ENCODE measurements at regions of chr12 and their contacts with region 1.

Region 1: GRCh38 chr12:108193917-108194316 is 64.8 kb downstream of the WSCD2 start:
- DNase-seq: peak; percentile 48
- ATAC-seq: no peak
- H3K4me3 Mint-ChIP-seq: no peak overlapping the region
- H3K27ac Mint-ChIP-seq: no peak overlapping the region
- H3K4me1 Mint-ChIP-seq: no peaks in the 10 kb centered on the region
- H3K27me3 Mint-ChIP-seq: peaks cover 7% of the 10 kb centered on the region

Region 2: GRCh38 chr12:107670999-107671643 is 522.8 kb before region 1 on chr12:
- CTCF ChIA-PET with region 1: no interaction called
- POLR2A ChIA-PET with region 1: no interaction called
- intact Hi-C with region 1: loop called in 1 of 2 experiments (anchors 10 kb)
- DNase-seq: peak; percentile 73
- ATAC-seq: peak; percentile 79
- H3K4me3 Mint-ChIP-seq: peak overlapping the region; percentile 37
- H3K27ac Mint-ChIP-seq: no peak overlapping the region
- H3K4me1 Mint-ChIP-seq: peaks cover 4% of the 10 kb centered on the region
- H3K27me3 Mint-ChIP-seq: peaks cover 7% of the 10 kb centered on the region

Region 3: GRCh38 chr12:107917912-107918800 is 275.8 kb before region 1 on chr12:
- CTCF ChIA-PET with region 1: interaction called, 7 read pairs
- POLR2A ChIA-PET with region 1: no interaction called
- intact Hi-C with region 1: loop called (anchors 2 to 5 kb)
- DNase-seq: peak; percentile 9
- ATAC-seq: peak; percentile 47
- H3K4me3 Mint-ChIP-seq: no peak overlapping the region
- H3K27ac Mint-ChIP-seq: no peak overlapping the region
- H3K4me1 Mint-ChIP-seq: no peaks in the 10 kb centered on the region
- H3K27me3 Mint-ChIP-seq: peaks cover 37% of the 10 kb centered on the region

Region 4: DNA sequence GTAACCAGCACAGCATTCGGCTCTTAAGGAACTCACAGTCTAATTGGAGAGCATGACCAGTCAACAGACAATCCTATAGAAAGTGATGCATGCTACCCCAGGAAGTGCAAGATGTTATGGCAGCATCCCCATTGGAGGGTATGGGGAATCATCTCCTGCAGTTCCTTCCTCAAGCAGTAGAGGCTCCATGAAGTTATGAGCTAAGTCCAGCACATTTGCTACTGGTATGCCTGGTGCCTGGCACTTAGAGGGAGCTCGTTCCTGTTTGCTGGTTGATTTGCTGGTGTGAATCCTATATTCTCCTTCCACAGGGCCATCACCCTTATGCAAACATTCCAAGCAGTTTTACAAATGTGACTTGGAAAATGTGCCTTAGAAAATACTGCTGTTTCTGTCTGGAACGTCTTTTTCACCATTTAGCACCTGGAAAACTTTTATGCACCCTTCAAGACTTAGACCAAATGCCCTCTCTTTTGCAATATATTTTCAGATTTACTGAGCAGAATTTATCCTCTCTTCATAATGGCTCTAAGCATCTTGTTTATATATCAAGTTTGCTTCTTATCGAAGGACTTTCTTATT is 201.0 kb before region 1 on chr12:
- CTCF ChIA-PET with region 1: interaction called, 5 read pairs
- POLR2A ChIA-PET with region 1: no interaction called
- intact Hi-C with region 1: loop called (anchors 1 kb)
- DNase-seq: peak; percentile 13
- ATAC-seq: no peak
- H3K4me3 Mint-ChIP-seq: no peak overlapping the region
- H3K27ac Mint-ChIP-seq: no peak overlapping the region
- H3K4me1 Mint-ChIP-seq: no peaks in the 10 kb centered on the region
- H3K27me3 Mint-ChIP-seq: peaks cover 28% of the 10 kb centered on the region

Region 5: DNA sequence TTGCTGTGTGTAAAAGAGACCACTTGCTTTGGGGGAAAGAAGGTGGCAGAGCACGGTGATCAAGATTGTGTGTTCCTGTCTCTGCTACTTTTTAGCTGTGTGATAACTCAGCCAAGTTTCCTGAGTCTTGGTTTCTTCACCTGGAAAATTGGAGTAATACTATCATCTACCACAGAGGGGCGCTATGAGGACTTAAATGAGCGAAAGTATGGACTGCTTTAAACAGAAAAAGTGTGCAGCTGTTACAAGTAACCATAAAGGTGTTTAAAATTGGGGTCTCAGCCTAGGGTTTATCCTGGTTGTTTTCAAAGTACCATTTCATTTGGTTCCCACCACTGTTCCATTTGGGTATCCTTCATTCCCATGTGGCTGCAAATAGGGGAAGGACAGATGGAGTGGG is 130.7 kb before region 1 on chr12:
- CTCF ChIA-PET with region 1: interaction called, 5 read pairs
- POLR2A ChIA-PET with region 1: no interaction called
- intact Hi-C with region 1: loop called in 1 of 2 experiments (anchors 2 kb)
- DNase-seq: no peak
- ATAC-seq: no peak
- H3K4me3 Mint-ChIP-seq: no peak overlapping the region
- H3K27ac Mint-ChIP-seq: no peak overlapping the region
- H3K4me1 Mint-ChIP-seq: no peaks in the 10 kb centered on the region
- H3K27me3 Mint-ChIP-seq: peaks cover 18% of the 10 kb centered on the region

Region 6: DNA sequence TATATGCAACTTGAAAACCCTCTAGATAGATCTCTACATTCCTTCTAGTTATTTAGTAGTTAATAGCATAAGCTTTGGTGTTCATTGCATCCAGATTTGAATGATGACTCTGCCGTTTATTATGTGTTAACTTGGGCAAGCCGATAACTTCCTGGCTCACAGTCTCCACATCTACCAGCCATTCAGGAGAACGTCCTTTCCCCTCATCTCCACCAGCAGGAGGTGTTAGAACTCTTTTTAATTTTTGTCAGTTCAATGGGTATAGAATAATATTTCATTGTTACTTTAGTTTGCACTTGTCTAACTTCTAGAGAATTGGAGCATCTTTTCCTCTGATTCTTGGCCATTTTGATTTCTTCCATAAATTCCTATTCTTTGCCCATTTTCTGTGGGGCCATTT is 94.8 kb before region 1 on chr12:
- CTCF ChIA-PET with region 1: no interaction called
- POLR2A ChIA-PET with region 1: no interaction called
- intact Hi-C with region 1: loop called in 1 of 2 experiments (anchors 10 kb)
- DNase-seq: no peak
- ATAC-seq: no peak
- H3K4me3 Mint-ChIP-seq: no peak overlapping the region
- H3K27ac Mint-ChIP-seq: no peak overlapping the region
- H3K4me1 Mint-ChIP-seq: no peaks in the 10 kb centered on the region
- H3K27me3 Mint-ChIP-seq: peaks cover 13% of the 10 kb centered on the region

Region 7: DNA sequence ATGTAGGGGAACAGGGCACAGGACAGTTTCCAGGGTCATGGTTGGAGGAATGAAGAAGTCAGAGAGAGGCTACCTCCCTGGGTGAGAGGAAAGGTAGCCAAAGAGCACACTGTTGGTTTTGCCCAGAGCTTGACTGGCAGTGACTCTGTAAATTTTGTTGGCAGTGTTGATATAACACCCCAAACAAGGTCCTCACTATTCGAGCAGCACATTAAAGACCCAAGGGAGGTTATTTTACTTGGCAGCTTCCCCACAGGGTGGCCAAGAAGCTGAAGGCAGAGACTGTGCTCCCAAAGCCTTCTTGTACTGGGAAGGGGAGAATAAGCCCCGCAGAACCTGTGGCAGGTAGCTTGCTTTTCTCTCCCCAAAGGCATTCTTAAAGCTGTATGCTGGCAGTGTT is 24.2 kb before region 1 on chr12:
- CTCF ChIA-PET with region 1: no interaction called
- POLR2A ChIA-PET with region 1: no interaction called
- intact Hi-C with region 1: no loop called
- DNase-seq: no peak
- ATAC-seq: no peak
- H3K4me3 Mint-ChIP-seq: no peak overlapping the region
- H3K27ac Mint-ChIP-seq: no peak overlapping the region
- H3K4me1 Mint-ChIP-seq: no peaks in the 10 kb centered on the region
- H3K27me3 Mint-ChIP-seq: peaks cover 23% of the 10 kb centered on the region

Region 8: DNA sequence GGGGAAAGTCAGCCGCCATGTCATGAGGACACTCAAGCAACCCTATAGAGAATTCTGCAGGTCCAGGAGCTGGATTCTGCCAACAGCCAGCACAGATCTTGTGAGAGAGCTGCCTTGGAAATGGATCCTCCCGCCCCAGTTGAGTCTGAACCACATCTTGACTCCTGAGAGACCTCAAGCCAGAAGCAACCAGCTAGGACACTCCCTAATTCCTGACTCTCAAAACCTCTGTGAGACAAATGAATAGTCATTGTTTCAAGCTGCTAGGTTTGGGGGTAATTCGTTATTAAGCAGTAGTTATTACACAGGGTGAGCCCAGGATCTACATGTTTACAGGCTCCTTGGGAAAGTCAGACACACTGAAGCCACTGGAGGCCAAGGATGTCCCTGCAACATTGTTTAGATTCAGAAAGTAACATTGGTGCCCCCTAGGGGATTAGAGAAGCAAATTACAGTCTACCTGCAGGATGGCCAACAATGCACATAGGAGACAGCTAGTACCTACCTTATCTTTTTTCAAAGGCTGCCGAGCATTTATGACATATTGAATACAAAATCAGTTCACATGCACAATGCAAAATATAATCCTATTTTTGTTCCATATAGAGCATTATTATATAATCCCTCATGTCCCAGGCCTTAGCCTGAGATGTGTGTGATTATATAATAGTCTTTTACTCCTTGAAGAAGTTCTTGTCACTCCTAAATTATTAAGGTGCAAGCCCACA is 263.3 kb after region 1 on chr12:
- CTCF ChIA-PET with region 1: no interaction called
- POLR2A ChIA-PET with region 1: no interaction called
- intact Hi-C with region 1: loop called in 1 of 2 experiments (anchors 5 kb)
- DNase-seq: peak; percentile 15
- ATAC-seq: no peak
- H3K4me3 Mint-ChIP-seq: no peak overlapping the region
- H3K27ac Mint-ChIP-seq: no peak overlapping the region
- H3K4me1 Mint-ChIP-seq: no peaks in the 10 kb centered on the region
- H3K27me3 Mint-ChIP-seq: peaks cover 15% of the 10 kb centered on the region

Measured in activated CD4-positive, alpha-beta T cell treated with anti-CD3 and anti-CD28 coated beads for 36 hours (primary cell).